ENCODE measurements at regions of chr7 and their contacts with region 1.

Region 1: DNA sequence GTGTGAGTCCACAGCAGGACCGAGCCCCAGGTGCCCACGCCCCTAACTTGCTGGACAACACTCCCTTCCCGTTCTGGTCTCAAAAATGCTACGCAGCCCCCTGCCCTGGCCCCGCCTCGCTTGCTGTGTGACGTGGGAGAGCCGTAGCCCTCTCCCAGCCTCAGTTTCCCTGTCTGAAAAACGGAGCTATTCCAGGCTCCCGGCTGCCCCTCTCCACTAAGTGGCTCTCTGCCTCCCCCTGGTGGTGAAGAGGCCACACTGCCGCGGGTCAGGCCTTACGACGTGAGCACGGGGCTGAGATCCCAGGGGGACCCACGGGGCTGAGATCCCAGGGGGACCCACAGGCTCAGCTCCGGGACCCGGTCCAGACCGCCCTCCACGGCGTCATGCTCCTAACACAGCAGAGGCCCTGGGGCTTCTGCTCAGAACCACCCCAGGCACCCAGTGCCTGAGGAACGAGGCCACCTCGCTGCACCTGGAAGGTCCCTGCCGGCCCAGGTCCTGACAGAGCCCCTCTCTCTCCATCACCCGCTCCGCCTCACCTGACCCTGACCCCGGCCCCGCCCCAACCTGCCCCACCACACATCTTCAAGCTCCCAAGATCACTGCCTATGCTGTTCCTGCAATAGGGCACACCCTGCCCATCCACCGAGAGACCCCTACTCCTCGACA is 26.7 kb downstream of the MICALL2 start:
- DNase-seq: peak; percentile 60 to 83
- H3K4me3 ChIP-seq: no peak overlapping the region
- H3K27ac ChIP-seq: no peak overlapping the region
- H3K4me1 ChIP-seq: peaks cover 0 to 10% (median 4%) of the 10 kb centered on the region in 4 donors
- H3K27me3 ChIP-seq: peaks cover 0 to 46% of the 10 kb centered on the region in 2 donors
- CTCF ChIP-seq: peak; percentile 92 to 97

Region 2: DNA sequence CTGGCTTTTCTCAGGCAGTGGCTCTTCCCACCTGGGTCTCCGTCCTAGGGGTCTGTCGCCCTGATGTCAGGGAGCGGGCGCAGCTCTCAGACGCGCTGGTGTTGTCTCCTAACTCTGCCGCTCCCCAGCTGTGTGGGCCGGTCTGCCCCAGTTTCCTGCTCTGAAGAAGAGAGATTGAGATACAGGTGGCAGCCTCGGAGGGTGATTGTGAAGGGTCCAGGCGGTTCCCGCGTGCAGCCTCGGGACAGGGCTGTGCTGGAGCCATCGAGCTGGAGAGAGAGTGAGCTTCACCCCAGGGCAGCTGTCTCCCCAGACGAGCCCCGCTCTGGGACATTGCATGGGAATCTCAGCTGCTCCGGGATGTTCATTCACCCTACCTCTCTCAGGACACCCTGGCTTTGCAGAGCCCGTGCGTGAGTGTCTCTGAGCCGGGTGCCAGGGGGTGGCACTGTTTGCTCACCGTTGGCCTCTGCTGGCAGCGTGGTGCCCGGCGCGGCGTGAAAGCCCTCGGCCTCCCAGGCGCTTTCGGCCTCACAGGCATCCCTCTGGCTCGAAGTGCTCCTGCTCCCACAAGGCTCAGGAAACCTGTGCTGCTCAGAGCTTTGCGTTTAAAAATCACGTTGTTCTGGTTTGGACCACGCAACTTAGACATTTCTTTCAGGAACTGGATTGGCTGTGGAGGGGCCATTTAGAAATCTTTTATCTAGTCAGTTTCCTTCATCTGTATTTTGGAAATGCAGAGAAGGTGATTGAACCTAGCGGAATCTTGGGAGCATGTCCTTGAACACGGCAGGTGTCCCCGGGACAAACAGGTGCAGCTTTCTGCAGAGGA is 238.7 kb before region 1 on chr7:
- intact Hi-C with region 1: loop called (anchors 10 kb)
- DNase-seq: no peak
- H3K4me3 ChIP-seq: no peak overlapping the region
- H3K27ac ChIP-seq: no peak overlapping the region
- H3K4me1 ChIP-seq: no peaks in the 10 kb centered on the region
- H3K27me3 ChIP-seq: peaks cover 0 to 74% of the 10 kb centered on the region in 2 donors
- CTCF ChIP-seq: peak; percentile 39 to 40

Region 3: GRCh38 chr7:1225441-1226185 is 206.9 kb before region 1 on chr7:
- intact Hi-C with region 1: loop called (anchors 10 kb)
- DNase-seq: no peak
- H3K4me3 ChIP-seq: no peak overlapping the region
- H3K27ac ChIP-seq: no peak overlapping the region
- H3K4me1 ChIP-seq: peaks cover 0 to 24% (median 12%) of the 10 kb centered on the region in 4 donors
- H3K27me3 ChIP-seq: peaks cover 15 to 97% of the 10 kb centered on the region in 2 donors
- CTCF ChIP-seq: peak; percentile 66 to 73

Region 4: GRCh38 chr7:1473864-1474512 is 41.4 kb after region 1 on chr7:
- intact Hi-C with region 1: loop called (anchors 1 kb)
- DNase-seq: peak; percentile 73 to 91
- H3K4me3 ChIP-seq: no peak overlapping the region
- H3K27ac ChIP-seq: no peak overlapping the region
- H3K4me1 ChIP-seq: no peaks in the 10 kb centered on the region
- H3K27me3 ChIP-seq: no peaks in the 10 kb centered on the region
- CTCF ChIP-seq: peak; percentile 86 to 96

Measured in tibial artery (tissue), 4 donors.